H1 (cell line): ENCODE measurements at regions of chr6 and their contacts with region 1.

Region 1: DNA sequence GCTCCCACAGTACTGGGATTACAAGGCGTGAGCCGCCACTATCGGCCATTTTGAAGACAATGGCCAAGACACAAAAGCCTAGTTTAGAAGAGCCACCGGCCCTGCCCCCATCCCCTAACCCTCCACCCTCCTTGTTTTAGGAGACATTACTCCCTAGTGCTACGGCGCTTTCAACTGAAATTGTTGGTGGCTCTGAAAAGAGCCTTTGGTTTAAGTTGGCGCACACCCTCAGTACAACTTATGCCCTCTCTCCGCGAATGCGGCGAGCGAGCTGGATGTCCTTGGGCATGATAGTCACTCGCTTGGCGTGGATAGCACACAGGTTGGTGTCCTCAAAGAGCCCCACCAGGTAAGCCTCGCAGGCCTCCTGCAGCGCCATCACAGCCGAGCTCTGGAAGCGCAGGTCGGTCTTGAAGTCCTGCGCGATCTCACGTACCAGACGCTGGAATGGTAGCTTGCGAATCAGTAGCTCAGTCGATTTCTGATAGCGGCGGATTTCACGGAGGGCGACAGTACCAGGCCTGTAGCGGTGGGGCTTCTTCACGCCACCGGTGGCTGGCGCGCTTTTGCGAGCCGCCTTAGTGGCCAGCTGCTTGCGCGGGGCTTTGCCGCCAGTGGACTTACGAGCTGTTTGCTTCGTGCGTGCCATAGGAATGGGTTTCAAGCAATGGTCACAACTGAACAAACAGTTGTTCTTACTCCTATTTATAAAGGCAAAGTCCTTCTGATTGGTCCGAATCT is 114.9 kb upstream of the BTN3A2 start:
- DNase-seq: peak in 1 of 2 experiments; percentile 73
- H3K4me3 ChIP-seq: peak overlapping the region; percentile 75 to 98 (median 90)
- H3K27ac ChIP-seq: peak overlapping the region; percentile 97
- H3K4me1 ChIP-seq: peaks cover 0 to 5% (median 4%) of the 10 kb centered on the region in 4 experiments; a peak in 5 of 7 replicates
- H3K27me3 ChIP-seq: no peaks in the 10 kb centered on the region
- CTCF ChIP-seq: peak in 2 of 3 experiments; percentile 23 to 34; a peak in 2 of 4 replicates
- EP300 ChIP-seq: 0 out of 3 replicates have a peak, but pooled peaks of 1 of the 2 experiments have one; percentile 34
- POLR2A ChIP-seq: peak; percentile 98
- RAD21 ChIP-seq: no peak

Region 2: GRCh38 chr6:26141378-26141904 is 108.7 kb before region 1 on chr6:
- CTCF ChIA-PET with region 1: no interaction called
- POLR2A ChIA-PET with region 1: no interaction called
- DNase-seq: no peak
- H3K4me3 ChIP-seq: no peak overlapping the region
- H3K27ac ChIP-seq: no peak overlapping the region
- H3K4me1 ChIP-seq: no peaks in the 10 kb centered on the region
- H3K27me3 ChIP-seq: no peaks in the 10 kb centered on the region
- CTCF ChIP-seq: no peak
- EP300 ChIP-seq: no peak
- POLR2A ChIP-seq: no peak
- RAD21 ChIP-seq: no peak

Region 3: GRCh38 chr6:26295691-26296555 is 45.8 kb after region 1 on chr6:
- CTCF ChIA-PET with region 1: no interaction called
- POLR2A ChIA-PET with region 1: interaction called, 12 read pairs
- DNase-seq: no peak
- H3K4me3 ChIP-seq: no peak overlapping the region
- H3K27ac ChIP-seq: no peak overlapping the region
- H3K4me1 ChIP-seq: peaks cover 0 to 4% (median 0%) of the 10 kb centered on the region in 4 experiments; a peak in 1 of 7 replicates
- H3K27me3 ChIP-seq: peaks cover 0 to 1% (median 0%) of the 10 kb centered on the region in 4 experiments; a peak in 1 of 7 replicates
- CTCF ChIP-seq: no peak
- EP300 ChIP-seq: no peak
- POLR2A ChIP-seq: no peak
- RAD21 ChIP-seq: no peak

Region 4: GRCh38 chr6:26596579-26597388 is 346.7 kb after region 1 on chr6 and contains the start of gene ABT1:
- CTCF ChIA-PET with region 1: no interaction called
- POLR2A ChIA-PET with region 1: no interaction called
- DNase-seq: peak; percentile 91 to 99
- H3K4me3 ChIP-seq: peak within 1 kb of the TSS; percentile 92 to 100 (median 99)
- H3K27ac ChIP-seq: peak within 1 kb of the TSS; percentile 72
- H3K4me1 ChIP-seq: peaks cover 0 to 5% (median 2%) of the 10 kb centered on the region in 4 experiments; a peak in 5 of 7 replicates
- H3K27me3 ChIP-seq: no peaks in the 10 kb centered on the region
- CTCF ChIP-seq: no peak
- EP300 ChIP-seq: no peak
- POLR2A ChIP-seq: peak; percentile 40 to 78
- RAD21 ChIP-seq: no peak
- total RNA-seq, gene ABT1: 20.5 and 20.6 TPM in 2 replicates

Region 5: GRCh38 chr6:27816906-27817305 is 1566.8 kb after region 1 on chr6:
- CTCF ChIA-PET with region 1: no interaction called
- POLR2A ChIA-PET with region 1: interaction called, 20 read pairs
- DNase-seq: peak in 1 of 2 experiments; percentile 39
- H3K4me3 ChIP-seq: no peak overlapping the region
- H3K27ac ChIP-seq: no peak overlapping the region
- H3K4me1 ChIP-seq: peaks cover 0 to 4% (median 1%) of the 10 kb centered on the region in 4 experiments; a peak in 3 of 7 replicates
- H3K27me3 ChIP-seq: no peaks in the 10 kb centered on the region
- CTCF ChIP-seq: no peak
- EP300 ChIP-seq: no peak
- POLR2A ChIP-seq: no peak
- RAD21 ChIP-seq: no peak

Region 6: DNA sequence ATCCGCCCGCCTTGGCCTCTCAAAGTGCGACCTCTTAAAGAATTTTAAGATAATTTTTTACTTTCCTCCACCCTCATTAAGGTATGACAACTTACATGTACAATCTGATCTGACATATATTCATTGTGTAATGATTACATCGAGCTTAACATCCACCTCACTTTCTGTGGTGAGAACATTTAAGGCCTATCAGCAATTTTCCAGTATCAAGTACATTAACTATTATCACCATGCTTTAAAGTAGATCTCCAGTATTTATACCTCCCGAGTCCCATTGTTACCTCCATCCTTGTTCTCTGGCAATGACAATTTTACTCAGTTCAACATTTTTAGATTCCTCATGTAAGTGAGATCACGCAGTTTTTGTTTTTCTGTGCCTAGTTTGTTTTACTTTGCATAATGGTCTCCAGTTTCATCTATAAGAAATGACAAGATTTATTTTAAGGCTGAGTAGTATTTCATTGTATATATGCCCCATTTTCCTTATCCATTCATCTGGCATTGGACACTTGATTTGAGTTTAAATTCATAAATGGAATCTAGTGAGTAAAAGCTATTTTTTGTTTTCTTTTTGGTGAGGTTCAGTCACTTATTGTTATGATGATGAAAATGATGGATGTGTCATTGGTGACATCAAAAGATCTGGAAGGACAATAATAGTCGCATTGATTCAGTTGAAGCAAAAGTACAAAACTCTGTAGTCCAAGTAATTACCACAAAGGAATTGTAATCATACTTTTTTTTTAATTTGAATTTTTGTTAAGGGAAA is 1575.1 kb after region 1 on chr6:
- CTCF ChIA-PET with region 1: no interaction called
- POLR2A ChIA-PET with region 1: interaction called, 16 read pairs
- DNase-seq: no peak
- H3K4me3 ChIP-seq: peak overlapping the region; percentile 59 to 90 (median 81)
- H3K27ac ChIP-seq: peak overlapping the region; percentile 95; the same call in 1 of the 2 replicates
- H3K4me1 ChIP-seq: peaks cover 0 to 3% (median 0%) of the 10 kb centered on the region in 4 experiments; a peak in 1 of 7 replicates
- H3K27me3 ChIP-seq: no peaks in the 10 kb centered on the region
- CTCF ChIP-seq: no peak
- EP300 ChIP-seq: no peak
- POLR2A ChIP-seq: peak in 1 of 2 experiments; percentile 32; a peak in 2 of 3 replicates
- RAD21 ChIP-seq: no peak